Aorta (tissue), 5 donors: ENCODE measurements at regions of chr13 and their contacts with region 1.

Region 1: DNA sequence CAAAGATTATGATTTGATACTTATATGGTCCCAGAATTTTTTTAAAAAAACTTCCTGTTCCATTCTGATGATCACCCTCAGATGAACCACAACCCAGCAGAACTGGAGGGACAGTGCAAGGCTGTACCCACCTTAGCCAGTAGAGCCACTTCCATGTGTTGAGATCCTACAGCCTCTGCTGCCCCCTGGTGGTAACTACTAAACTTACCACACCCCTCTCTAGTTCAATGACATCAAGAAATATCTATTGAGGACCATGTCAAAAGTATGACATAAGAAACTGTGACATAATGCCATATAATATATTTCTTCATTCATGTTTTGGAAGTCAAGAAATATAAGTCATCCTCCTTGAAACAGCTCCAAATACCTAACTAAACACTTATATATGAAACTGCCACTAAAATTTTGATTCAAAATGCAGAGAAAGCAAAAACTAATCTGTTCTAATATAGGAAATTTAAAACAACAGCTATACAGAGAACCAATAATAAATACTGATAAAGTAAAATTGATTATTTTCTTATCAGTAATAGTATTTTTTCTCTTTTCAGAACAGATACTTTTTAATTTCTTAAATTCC is 412.6 kb downstream of the KCTD12 start:
- DNase-seq: peak; percentile 70 to 74
- ATAC-seq: peak; percentile 95
- H3K4me3 ChIP-seq: no peak overlapping the region
- H3K27ac ChIP-seq: no peak overlapping the region
- H3K4me1 ChIP-seq: peaks cover 2% of the 10 kb centered on the region in 2 donors
- H3K27me3 ChIP-seq: no peaks in the 10 kb centered on the region

Region 2: DNA sequence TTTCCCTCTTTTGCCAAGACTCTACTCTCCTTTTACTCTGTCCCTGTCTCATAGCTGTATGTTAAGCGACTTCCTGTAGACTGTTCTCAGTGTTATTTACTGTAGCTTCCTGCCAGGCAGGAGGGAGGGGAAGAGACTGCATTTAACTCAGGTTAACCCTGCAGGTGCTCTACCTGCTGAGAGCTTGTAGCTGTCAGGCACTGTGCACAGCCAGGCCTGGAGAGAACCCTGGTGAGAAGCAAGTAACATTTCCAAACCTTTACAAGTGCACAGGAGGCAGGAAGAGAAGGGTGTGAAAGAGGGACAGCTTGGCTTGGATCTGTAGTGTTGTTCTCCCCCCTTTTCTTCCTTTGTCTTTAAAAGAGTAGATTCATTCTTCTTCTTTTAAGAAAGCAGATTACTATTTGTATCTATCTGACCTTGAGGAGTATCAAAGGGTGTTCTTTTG is 670.5 kb before region 1 on chr13:
- intact Hi-C with region 1: no loop called
- DNase-seq: no peak
- ATAC-seq: peak; percentile 4
- H3K4me3 ChIP-seq: no peak overlapping the region
- H3K27ac ChIP-seq: peak overlapping the region; percentile 85 to 95
- H3K4me1 ChIP-seq: peaks cover 2 to 5% of the 10 kb centered on the region in 2 donors
- H3K27me3 ChIP-seq: no peaks in the 10 kb centered on the region

Region 3: DNA sequence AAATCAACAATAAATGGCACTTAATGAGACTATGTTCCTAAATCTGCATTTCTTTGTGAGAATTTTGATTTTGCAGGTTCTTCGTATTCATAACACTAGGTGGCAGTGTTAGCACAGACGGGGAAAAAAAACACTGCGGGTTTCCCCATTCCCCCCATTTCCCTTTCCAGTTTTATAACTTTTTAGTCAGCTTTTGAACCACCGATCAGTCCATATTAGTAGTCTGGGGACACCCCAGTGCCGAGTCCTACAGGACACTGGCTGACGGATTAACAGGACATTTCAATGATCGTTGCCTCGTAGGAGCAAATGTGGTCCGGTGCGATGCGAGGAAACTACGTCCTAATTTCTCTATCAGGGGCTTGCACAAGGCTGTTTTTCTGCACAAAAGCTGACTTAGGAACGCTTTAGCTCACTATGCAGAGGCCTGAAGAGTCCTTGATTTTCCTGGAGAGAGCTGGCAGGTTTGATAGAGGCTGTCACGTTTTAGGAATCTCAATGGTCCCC is 603.2 kb before region 1 on chr13:
- intact Hi-C with region 1: loop called (anchors 2 kb)
- DNase-seq: no peak
- ATAC-seq: peak; percentile 81
- H3K4me3 ChIP-seq: peak overlapping the region; percentile 31 to 32
- H3K27ac ChIP-seq: no peak overlapping the region
- H3K4me1 ChIP-seq: no peaks in the 10 kb centered on the region
- H3K27me3 ChIP-seq: no peaks in the 10 kb centered on the region